Transverse colon (tissue), 4 donors: ENCODE measurements at regions of chr6 and their contacts with region 1.

Region 1: DNA sequence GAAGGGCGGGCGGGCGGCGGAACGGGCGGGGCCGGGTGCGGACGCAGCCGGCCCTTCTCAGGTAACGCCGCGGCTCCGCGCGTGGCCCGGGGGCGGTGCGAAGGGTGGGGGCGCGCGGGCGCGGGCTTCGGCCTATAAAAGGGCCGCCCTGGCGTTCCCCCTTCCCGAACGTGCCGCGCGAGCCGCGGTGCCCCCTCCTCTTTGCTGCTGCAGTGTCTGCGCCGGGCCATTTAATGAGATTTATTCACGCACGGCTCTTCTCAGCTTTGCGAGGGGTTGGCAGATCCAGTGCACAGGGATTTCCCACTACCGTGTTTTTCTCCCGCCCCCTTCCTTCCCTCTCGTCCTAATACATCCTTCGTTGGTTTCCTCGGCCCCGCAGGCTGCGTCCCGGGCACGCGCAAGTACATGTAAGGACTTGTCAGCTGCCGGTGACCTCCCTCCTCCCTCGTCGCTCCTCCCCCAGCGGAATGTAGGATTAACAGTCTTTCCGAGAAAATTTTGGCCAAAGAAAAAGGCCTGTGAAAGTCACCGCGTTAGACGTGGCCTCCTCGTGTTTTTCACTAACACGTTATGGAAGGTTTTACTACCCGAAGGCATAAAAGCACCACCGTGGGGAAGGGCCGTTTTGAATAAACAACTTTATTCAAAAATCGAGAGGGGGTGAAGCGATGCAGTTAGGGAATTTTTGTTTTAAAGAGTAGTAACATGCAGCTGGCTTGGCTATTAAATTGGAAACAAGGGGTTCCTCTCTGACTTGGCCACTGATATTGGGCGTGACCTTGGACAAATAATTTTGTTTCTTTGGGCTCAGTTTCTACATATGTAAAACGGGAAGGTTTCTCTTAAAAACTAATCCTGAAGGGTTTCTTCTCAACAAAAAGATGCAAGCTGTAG is 966 bp upstream of the REV3L start:
- DNase-seq: peak; percentile 92
- H3K4me3 ChIP-seq: peak overlapping the region; percentile 81 to 94 (median 92)
- H3K27ac ChIP-seq: peak overlapping the region; percentile 98 to 100 (median 98)
- H3K4me1 ChIP-seq: peaks cover 0 to 39% (median 30%) of the 10 kb centered on the region in 4 donors
- H3K27me3 ChIP-seq: no peaks in the 10 kb centered on the region
- CTCF ChIP-seq: no peak
- EP300 ChIP-seq: peak; percentile 11
- POLR2A ChIP-seq: peak; percentile 83

Region 2: DNA sequence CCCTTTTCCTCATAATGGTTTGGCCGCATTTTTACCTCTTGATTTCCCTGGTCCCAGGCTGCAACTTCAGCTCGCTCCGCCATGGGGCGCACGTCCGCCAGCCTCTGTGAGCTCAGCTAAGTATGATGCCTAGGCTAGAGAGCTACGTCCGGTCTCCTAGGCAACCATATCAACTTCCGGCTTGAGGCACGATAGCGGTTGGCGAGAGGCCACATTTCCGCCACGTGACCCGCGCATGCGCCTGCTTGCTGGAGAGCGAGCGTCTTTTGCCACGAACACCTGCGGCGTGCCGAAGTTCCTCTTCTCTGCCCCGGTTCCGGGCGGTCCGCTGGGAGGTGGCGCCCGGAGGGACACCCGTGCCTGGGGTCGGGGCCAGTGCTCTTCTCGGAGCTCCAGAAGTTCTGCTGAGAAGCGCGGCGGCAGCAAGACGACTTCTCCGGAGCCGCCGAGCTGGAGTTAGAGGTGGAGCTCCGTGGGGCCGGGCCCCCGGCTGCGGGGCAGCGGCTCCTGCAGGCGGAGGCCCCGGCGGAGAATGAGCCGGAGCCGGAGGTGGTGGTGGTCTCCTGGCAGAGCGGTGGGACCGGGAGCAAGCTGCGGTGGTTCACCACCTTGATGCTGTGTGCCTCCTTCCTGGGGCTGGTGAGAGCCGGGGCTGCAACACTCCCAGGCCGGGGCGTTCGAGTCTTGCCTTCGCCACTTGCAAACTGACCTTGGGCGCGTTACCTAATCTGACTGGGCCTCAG is 224.7 kb before region 1 on chr6:
- in situ Hi-C with region 1: loop called in 1 of 4 experiments (anchors 25 kb)
- intact Hi-C with region 1: no loop called
- DNase-seq: peak; percentile 99
- H3K4me3 ChIP-seq: peak overlapping the region; percentile 57 to 87 (median 68)
- H3K27ac ChIP-seq: peak overlapping the region; percentile 95 to 96 (median 96)
- H3K4me1 ChIP-seq: peaks cover 9 to 26% (median 13%) of the 10 kb centered on the region in 4 donors
- H3K27me3 ChIP-seq: no peaks in the 10 kb centered on the region
- CTCF ChIP-seq: peak; percentile 90 to 99 (median 94)
- EP300 ChIP-seq: no peak
- POLR2A ChIP-seq: peak; percentile 72

Region 3: DNA sequence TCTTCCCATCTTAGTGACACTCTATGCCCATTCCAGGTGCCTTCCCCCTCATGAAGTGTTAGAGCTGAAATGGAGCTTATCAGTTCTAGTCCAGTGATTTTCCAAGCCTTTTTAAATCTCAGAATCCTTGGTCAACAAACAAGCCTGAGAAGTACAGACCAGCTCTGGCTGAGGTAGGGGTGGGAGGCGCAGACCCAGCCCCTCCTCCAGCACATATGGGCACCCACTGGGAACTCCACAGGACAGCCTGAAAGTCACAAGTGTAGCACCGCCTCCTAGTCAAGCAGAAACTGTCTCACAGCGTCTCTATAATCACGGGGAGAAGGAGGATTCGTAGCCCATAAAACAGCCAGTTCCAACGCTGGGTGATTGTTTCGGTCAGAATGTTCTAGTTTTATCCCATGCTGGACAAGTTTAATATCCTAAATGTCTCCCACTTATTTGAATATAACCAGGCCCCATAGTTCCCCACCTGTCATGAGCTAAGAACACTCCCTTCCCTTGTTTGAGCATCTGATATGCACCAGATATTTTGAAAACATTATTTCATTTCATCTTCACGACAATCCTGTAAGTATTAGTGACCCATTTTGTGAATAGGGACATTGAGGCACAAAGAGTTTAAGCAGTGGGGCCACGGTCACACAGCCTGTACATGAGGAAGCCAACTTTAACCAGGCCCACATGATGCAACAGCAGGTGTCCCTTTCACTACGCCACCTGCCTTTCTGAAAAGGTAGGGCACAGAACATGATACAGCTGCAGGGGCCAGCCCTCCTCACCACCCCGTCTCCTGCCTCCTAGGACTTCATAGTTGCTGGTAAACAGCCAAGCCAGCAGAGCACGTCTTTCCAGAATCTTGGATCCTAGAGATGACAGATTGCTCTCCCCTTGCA is 81.6 kb after region 1 on chr6:
- in situ Hi-C with region 1: no loop called
- intact Hi-C with region 1: loop called (anchors 10 kb)
- DNase-seq: no peak
- H3K4me3 ChIP-seq: no peak overlapping the region
- H3K27ac ChIP-seq: peak overlapping the region; percentile 58 to 70 (median 62)
- H3K4me1 ChIP-seq: peaks cover 0 to 49% (median 15%) of the 10 kb centered on the region in 4 donors
- H3K27me3 ChIP-seq: no peaks in the 10 kb centered on the region
- CTCF ChIP-seq: peak; percentile 28 to 57 (median 31)
- EP300 ChIP-seq: no peak
- POLR2A ChIP-seq: no peak

Region 4: GRCh38 chr6:111591104-111591900 is 107.3 kb after region 1 on chr6:
- in situ Hi-C with region 1: loop called in 1 of 4 experiments (anchors 25 kb)
- intact Hi-C with region 1: no loop called
- DNase-seq: peak; percentile 85
- H3K4me3 ChIP-seq: no peak overlapping the region
- H3K27ac ChIP-seq: peak overlapping the region; percentile 75 to 80 (median 79)
- H3K4me1 ChIP-seq: peaks cover 22 to 64% (median 29%) of the 10 kb centered on the region in 4 donors
- H3K27me3 ChIP-seq: no peaks in the 10 kb centered on the region
- CTCF ChIP-seq: no peak
- EP300 ChIP-seq: no peak
- POLR2A ChIP-seq: no peak

Region 5: GRCh38 chr6:111605100-111605751 is 121.2 kb after region 1 on chr6:
- in situ Hi-C with region 1: no loop called
- intact Hi-C with region 1: loop called (anchors 10 kb)
- DNase-seq: peak; percentile 64
- H3K4me3 ChIP-seq: peak overlapping the region; percentile 28 to 68 (median 48)
- H3K27ac ChIP-seq: peak overlapping the region; percentile 87 to 98 (median 95)
- H3K4me1 ChIP-seq: peaks cover 28 to 65% (median 62%) of the 10 kb centered on the region in 4 donors
- H3K27me3 ChIP-seq: no peaks in the 10 kb centered on the region
- CTCF ChIP-seq: no peak
- EP300 ChIP-seq: peak; percentile 54
- POLR2A ChIP-seq: no peak